Endothelial cell of umbilical vein (primary cell): ENCODE measurements at regions of chr12 and their contacts with region 1.

Region 1: DNA sequence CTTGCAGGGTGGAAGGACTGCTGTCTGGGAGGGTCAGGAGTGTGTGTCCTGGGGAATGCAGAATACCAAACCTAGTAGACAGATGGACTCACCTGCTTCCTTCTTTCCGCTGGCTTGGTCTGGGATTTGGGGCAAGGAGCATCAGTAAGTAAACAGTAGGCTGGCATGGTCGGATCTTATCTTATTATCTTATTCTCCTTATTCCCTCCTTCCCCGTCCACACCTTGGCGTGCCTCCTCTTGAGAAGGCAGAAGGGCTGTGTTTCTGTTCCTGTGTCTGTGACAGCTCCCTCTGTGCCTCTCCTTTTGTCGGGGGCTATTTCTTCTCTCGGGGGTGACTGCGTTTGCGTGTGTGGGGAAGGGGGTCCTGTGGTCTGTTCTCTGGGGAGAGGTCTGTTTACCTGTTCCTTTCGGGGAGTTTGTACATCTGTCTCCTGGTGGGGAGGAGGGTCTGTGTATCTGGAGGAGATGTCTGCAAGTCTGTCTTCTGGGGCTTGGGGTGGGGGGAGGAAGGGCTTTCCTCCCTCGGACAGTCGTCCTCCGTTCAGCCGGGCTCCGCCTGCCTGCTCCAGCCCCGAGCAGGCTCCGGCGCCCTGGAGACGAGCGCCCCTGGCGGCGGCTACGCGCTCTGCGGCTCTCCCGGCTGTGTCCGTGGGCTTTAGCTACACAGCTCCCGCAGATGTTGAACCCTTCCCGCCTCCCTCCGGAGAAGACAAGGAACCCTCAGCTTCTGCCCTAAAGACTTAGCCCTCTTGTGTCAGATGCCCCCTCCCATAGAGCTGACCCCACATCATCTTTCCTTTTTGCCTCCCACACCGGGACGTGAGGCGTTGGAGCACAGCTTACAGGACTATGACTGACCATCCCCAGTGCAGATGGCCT is 4.3 kb downstream of the KRT86 start:
- DNase-seq: peak; percentile 64
- H3K4me3 ChIP-seq: no peak overlapping the region
- H3K27ac ChIP-seq: no peak overlapping the region
- H3K4me1 ChIP-seq: peaks cover 3% of the 10 kb centered on the region
- H3K27me3 ChIP-seq: peaks cover 12% of the 10 kb centered on the region in 2 experiments
- CTCF ChIP-seq: peak; percentile 98 to 100
- POLR2A ChIP-seq: no peak

Region 2: GRCh38 chr12:52171950-52172512 is 106.8 kb before region 1 on chr12:
- CTCF ChIA-PET with region 1: interaction called, 10 read pairs
- POLR2A ChIA-PET with region 1: no interaction called
- dilution Hi-C with region 1: no loop called
- intact Hi-C with region 1: no loop called
- DNase-seq: no peak
- H3K4me3 ChIP-seq: no peak overlapping the region
- H3K27ac ChIP-seq: no peak overlapping the region
- H3K4me1 ChIP-seq: peaks cover 15% of the 10 kb centered on the region
- H3K27me3 ChIP-seq: no peaks in the 10 kb centered on the region
- CTCF ChIP-seq: peak; percentile 19 to 40
- POLR2A ChIP-seq: no peak

Region 3: GRCh38 chr12:52193991-52194390 is 84.8 kb before region 1 on chr12:
- CTCF ChIA-PET with region 1: no interaction called
- POLR2A ChIA-PET with region 1: no interaction called
- dilution Hi-C with region 1: no loop called
- intact Hi-C with region 1: no loop called
- DNase-seq: peak; percentile 70
- H3K4me3 ChIP-seq: no peak overlapping the region
- H3K27ac ChIP-seq: peak overlapping the region; percentile 87
- H3K4me1 ChIP-seq: peaks cover 58% of the 10 kb centered on the region
- H3K27me3 ChIP-seq: no peaks in the 10 kb centered on the region
- CTCF ChIP-seq: no peak
- POLR2A ChIP-seq: no peak

Region 4: DNA sequence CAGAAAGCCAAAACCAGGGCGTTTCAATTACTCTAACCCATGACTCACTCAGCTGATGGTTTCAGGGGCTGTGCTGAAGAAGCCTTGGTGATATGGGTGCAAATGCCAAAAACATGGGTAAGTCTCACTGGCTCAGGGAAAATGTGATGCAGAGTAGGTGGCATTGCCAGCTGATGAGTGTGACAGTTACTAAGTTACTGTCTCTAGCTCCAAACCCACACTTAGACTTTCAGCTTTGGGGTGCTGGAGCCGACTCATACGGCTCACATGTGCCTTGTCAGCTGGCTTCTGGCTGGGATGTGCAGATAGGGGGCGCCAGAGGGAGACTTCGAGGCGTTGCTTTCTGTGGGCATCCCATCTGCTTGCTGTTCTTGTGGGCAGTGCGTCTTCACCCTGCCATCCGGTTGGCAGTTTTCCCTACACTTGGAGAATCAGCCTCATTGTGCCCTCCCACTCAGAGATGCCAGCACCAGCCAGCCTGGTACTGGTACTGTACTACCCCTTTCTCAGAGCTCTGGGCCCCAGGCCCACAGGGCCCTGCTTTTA is 56.8 kb before region 1 on chr12:
- CTCF ChIA-PET with region 1: interaction called, 20 read pairs
- POLR2A ChIA-PET with region 1: interaction called, 6 read pairs
- dilution Hi-C with region 1: no loop called
- intact Hi-C with region 1: no loop called
- DNase-seq: peak; percentile 44
- H3K4me3 ChIP-seq: no peak overlapping the region
- H3K27ac ChIP-seq: no peak overlapping the region
- H3K4me1 ChIP-seq: peaks cover 11% of the 10 kb centered on the region
- H3K27me3 ChIP-seq: no peaks in the 10 kb centered on the region
- CTCF ChIP-seq: peak; percentile 70 to 78
- POLR2A ChIP-seq: no peak

Region 5: GRCh38 chr12:52258335-52258901 is 20.4 kb before region 1 on chr12:
- CTCF ChIA-PET with region 1: interaction called, 20 read pairs
- POLR2A ChIA-PET with region 1: no interaction called
- dilution Hi-C with region 1: no loop called
- intact Hi-C with region 1: no loop called
- DNase-seq: peak; percentile 44
- H3K4me3 ChIP-seq: no peak overlapping the region
- H3K27ac ChIP-seq: no peak overlapping the region
- H3K4me1 ChIP-seq: peaks cover 2% of the 10 kb centered on the region
- H3K27me3 ChIP-seq: peaks cover 33 to 37% of the 10 kb centered on the region in 2 experiments
- CTCF ChIP-seq: no peak
- POLR2A ChIP-seq: no peak

Region 6: DNA sequence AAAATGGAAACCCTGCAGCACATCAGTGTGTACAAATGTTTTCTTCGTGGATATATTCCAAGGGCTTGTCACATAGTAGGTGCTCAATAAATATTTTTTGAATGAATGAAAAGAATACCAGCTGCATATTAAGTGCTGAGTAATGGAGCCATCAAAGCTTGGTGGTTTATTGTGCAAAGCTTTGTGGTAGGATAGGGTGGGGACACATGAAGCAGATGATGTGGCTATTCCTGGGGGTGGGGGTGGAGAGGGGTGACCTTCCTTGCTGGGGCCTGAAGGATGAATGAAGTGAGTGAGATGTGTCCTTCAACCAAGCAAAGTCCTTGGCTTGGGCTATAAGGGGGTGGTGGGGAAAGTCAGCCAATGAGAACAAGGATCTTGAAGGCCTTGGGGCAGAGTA is 16.9 kb after region 1 on chr12:
- CTCF ChIA-PET with region 1: interaction called, 15 read pairs
- POLR2A ChIA-PET with region 1: no interaction called
- dilution Hi-C with region 1: no loop called
- intact Hi-C with region 1: no loop called
- DNase-seq: no peak
- H3K4me3 ChIP-seq: no peak overlapping the region
- H3K27ac ChIP-seq: no peak overlapping the region
- H3K4me1 ChIP-seq: no peaks in the 10 kb centered on the region
- H3K27me3 ChIP-seq: peaks cover 39 to 58% of the 10 kb centered on the region in 2 experiments
- CTCF ChIP-seq: no peak
- POLR2A ChIP-seq: no peak